IMR-90 (cell line): ENCODE measurements at regions of chr4 and their contacts with region 1.

Region 1: GRCh38 chr4:76585897-76586360 is 150.9 kb downstream of the SHROOM3 start:
- DNase-seq: no peak
- ATAC-seq: no peak
- H3K4me3 ChIP-seq: peak overlapping the region; percentile 38; the same call in 1 of the 2 replicates
- H3K27ac ChIP-seq: peak overlapping the region; percentile 3; the same call in 1 of the 2 replicates
- H3K4me1 ChIP-seq: peaks cover 15% of the 10 kb centered on the region
- H3K27me3 ChIP-seq: no peaks in the 10 kb centered on the region
- CTCF ChIP-seq: no peak
- POLR2A ChIP-seq: no peak
- RAD21 ChIP-seq: no peak

Region 2: GRCh38 chr4:75786526-75786925 is 799.4 kb before region 1 on chr4:
- CTCF ChIA-PET with region 1: no interaction called
- POLR2A ChIA-PET with region 1: no interaction called
- dilution Hi-C with region 1: no loop called
- in situ Hi-C with region 1: no loop called
- intact Hi-C with region 1: no loop called
- DNase-seq: no peak
- ATAC-seq: no peak
- H3K4me3 ChIP-seq: no peak overlapping the region
- H3K27ac ChIP-seq: no peak overlapping the region
- H3K4me1 ChIP-seq: 0 out of 2 replicates have a peak, but pooled peaks cover 1% of the 10 kb centered on the region
- H3K27me3 ChIP-seq: no peaks in the 10 kb centered on the region
- CTCF ChIP-seq: no peak
- POLR2A ChIP-seq: no peak
- RAD21 ChIP-seq: no peak

Region 3: GRCh38 chr4:76494243-76494642 is 91.7 kb before region 1 on chr4:
- CTCF ChIA-PET with region 1: no interaction called
- POLR2A ChIA-PET with region 1: interaction called, 12 read pairs
- dilution Hi-C with region 1: no loop called
- in situ Hi-C with region 1: no loop called
- intact Hi-C with region 1: no loop called
- DNase-seq: no peak
- ATAC-seq: peak; percentile 53
- H3K4me3 ChIP-seq: no peak overlapping the region
- H3K27ac ChIP-seq: no peak overlapping the region
- H3K4me1 ChIP-seq: peaks cover 2% of the 10 kb centered on the region; the same call in 1 of the 2 replicates
- H3K27me3 ChIP-seq: peaks cover 16% of the 10 kb centered on the region
- CTCF ChIP-seq: no peak
- POLR2A ChIP-seq: no peak
- RAD21 ChIP-seq: no peak